ENCODE measurements at regions of chrX and their contacts with region 1.

Region 1: DNA sequence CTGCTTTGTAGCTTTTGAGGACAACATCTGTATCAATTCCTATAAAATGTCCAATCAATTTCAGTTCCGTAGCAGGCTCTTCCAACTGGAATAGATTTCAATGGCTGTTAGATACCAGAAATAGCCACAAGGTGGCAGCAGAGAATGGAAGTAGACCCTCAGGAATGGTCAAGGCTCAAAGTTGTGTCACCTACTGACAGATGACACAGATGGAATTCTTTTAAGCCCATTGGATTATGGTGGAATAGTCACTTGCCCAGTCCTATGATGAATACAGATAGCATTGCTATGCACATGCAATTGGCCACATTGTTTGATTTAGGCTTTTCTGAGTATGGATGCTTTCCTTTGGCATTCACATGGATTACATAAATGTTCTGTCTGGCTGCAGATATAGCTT is 130.4 kb upstream of the RADX start:
- DNase-seq: peak; percentile 46
- ATAC-seq: peak; percentile 80
- H3K4me3 ChIP-seq: no peak overlapping the region
- H3K27ac ChIP-seq: no peak overlapping the region
- H3K4me1 ChIP-seq: no peaks in the 10 kb centered on the region
- H3K27me3 ChIP-seq: no peaks in the 10 kb centered on the region
- CTCF ChIP-seq: peak; percentile 48 to 65 (median 56); a peak in 5 of 6 replicates
- POLR2A ChIP-seq: no peak
- RAD21 ChIP-seq: peak; percentile 83

Region 2: DNA sequence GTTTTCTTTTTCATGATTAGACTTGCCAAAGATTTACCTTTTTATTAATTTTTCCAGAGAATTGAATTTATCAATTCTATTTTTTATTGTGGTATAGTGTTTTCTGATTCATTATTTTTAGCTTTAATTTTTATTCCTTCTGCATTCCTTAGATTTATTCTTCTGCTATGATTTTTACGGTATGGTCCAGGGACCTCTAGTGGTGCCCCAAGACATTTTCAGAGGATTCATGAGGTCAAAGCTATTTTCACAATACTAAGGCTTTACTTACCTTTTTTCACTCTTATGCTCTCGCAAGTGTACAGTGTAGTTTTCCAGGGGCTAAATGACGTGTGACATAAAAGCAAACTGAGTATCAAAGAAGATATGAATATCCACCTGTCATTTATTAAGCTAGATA is 138.5 kb after region 1 on chrX:
- CTCF ChIA-PET with region 1: interaction called, 12 read pairs
- POLR2A ChIA-PET with region 1: no interaction called
- RAD21 ChIA-PET with region 1: no interaction called
- intact Hi-C with region 1: loop called (anchors 1 kb)
- DNase-seq: no peak
- ATAC-seq: no peak; the same call in 1 of the 2 replicates
- H3K4me3 ChIP-seq: no peak overlapping the region
- H3K27ac ChIP-seq: no peak overlapping the region
- H3K4me1 ChIP-seq: no peaks in the 10 kb centered on the region
- H3K27me3 ChIP-seq: no peaks in the 10 kb centered on the region
- CTCF ChIP-seq: peak; percentile 18 to 57 (median 45); a peak in 4 of 6 replicates
- POLR2A ChIP-seq: no peak
- RAD21 ChIP-seq: peak; percentile 54

Region 3: GRCh38 chrX:106752086-106752678 is 270.8 kb after region 1 on chrX:
- CTCF ChIA-PET with region 1: no interaction called
- POLR2A ChIA-PET with region 1: no interaction called
- RAD21 ChIA-PET with region 1: no interaction called
- intact Hi-C with region 1: loop called (anchors 5 kb)
- DNase-seq: no peak
- ATAC-seq: no peak
- H3K4me3 ChIP-seq: no peak overlapping the region
- H3K27ac ChIP-seq: no peak overlapping the region
- H3K4me1 ChIP-seq: no peaks in the 10 kb centered on the region
- H3K27me3 ChIP-seq: no peaks in the 10 kb centered on the region
- CTCF ChIP-seq: peak; percentile 9 to 39 (median 18); a peak in 3 of 6 replicates
- POLR2A ChIP-seq: no peak
- RAD21 ChIP-seq: peak; percentile 61

Region 4: GRCh38 chrX:106791495-106791894 is 310.2 kb after region 1 on chrX:
- CTCF ChIA-PET with region 1: no interaction called
- POLR2A ChIA-PET with region 1: no interaction called
- RAD21 ChIA-PET with region 1: no interaction called
- intact Hi-C with region 1: loop called (anchors 1 kb)
- DNase-seq: no peak
- ATAC-seq: no peak
- H3K4me3 ChIP-seq: no peak overlapping the region
- H3K27ac ChIP-seq: no peak overlapping the region
- H3K4me1 ChIP-seq: no peaks in the 10 kb centered on the region
- H3K27me3 ChIP-seq: no peaks in the 10 kb centered on the region
- CTCF ChIP-seq: peak; percentile 19 to 34 (median 33); a peak in 3 of 6 replicates
- POLR2A ChIP-seq: no peak
- RAD21 ChIP-seq: peak; percentile 50

Measured in HCT116 (cell line).